Right cardiac atrium (tissue), 5 donors: ENCODE measurements at regions of chrX and their contacts with region 1.

Region 1: DNA sequence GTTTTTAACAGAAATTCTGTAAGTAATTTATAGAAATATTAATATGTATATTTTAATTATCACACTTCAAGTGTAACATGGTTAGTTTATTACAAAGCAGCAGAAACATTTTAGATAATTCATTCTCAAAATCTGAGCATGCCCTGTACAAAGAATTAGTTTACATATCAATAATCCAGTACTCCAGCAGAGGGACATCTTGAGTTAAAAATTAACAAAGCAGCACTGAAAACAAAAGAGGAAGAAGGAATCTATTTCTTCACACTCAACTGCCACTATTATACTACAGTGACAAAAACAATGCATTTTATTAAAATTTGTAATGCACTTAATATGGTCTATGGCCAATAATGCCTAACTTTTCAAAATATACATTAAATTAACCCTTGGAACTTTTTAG is 179.1 kb upstream of the KLHL4 start:
- DNase-seq: no peak
- ATAC-seq: no peak
- H3K4me3 ChIP-seq: no peak overlapping the region
- H3K27ac ChIP-seq: no peak overlapping the region
- H3K4me1 ChIP-seq: no peaks in the 10 kb centered on the region
- H3K27me3 ChIP-seq: no peaks in the 10 kb centered on the region

Region 2: GRCh38 chrX:87284704-87285103 is 53.8 kb before region 1 on chrX:
- intact Hi-C with region 1: no loop called
- DNase-seq: no peak
- ATAC-seq: no peak
- H3K4me3 ChIP-seq: no peak overlapping the region
- H3K27ac ChIP-seq: no peak overlapping the region
- H3K4me1 ChIP-seq: no peaks in the 10 kb centered on the region
- H3K27me3 ChIP-seq: no peaks in the 10 kb centered on the region

Region 3: GRCh38 chrX:87517571-87518141 is 179.1 kb after region 1 on chrX and contains the start of gene KLHL4:
- intact Hi-C with region 1: no loop called
- DNase-seq: no peak
- ATAC-seq: peak; percentile 47 to 95
- H3K4me3 ChIP-seq: peak within 1 kb of the TSS; percentile 21
- H3K27ac ChIP-seq: no peak within 1 kb of the TSS
- H3K4me1 ChIP-seq: peaks cover 2% of the 10 kb centered on the region
- H3K27me3 ChIP-seq: no peaks in the 10 kb centered on the region
- total RNA-seq, gene KLHL4: 1.3 to 2.5 (median 2.1) TPM

Region 4: DNA sequence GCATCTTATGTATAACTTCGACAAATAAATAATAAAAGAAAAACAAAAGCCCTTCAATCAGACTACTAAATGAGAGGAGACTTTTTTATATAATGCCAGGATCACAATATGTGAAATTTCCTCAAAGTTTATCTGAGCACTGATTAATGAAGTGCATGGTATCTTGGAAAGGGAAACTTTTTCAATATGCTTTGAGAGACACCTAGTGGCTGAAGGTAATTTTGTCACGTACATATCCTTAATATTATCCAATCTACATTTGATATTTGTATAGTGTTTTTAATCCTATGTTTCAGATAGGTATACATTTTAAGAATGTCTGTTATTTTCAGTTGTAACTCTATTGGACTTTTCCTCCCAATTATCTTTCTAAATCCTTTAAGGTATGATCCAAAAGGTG is 325.9 kb after region 1 on chrX:
- intact Hi-C with region 1: loop called in 1 of 4 experiments (anchors 2 kb)
- DNase-seq: no peak
- ATAC-seq: no peak
- H3K4me3 ChIP-seq: no peak overlapping the region
- H3K27ac ChIP-seq: no peak overlapping the region
- H3K4me1 ChIP-seq: no peaks in the 10 kb centered on the region
- H3K27me3 ChIP-seq: no peaks in the 10 kb centered on the region